Dorsolateral prefrontal cortex (tissue), 120 donors: ENCODE measurements at regions of chr2 and their contacts with region 1.

Region 1: GRCh38 chr2:219388127-219388844 is 574 bp upstream of the DNPEP start:
- DNase-seq: peak; percentile 93 to 99 (median 97)
- H3K4me3 ChIP-seq: peak overlapping the region in 58 of 59 donors; percentile 24 to 98 (median 86)
- H3K27ac ChIP-seq: peak overlapping the region in 58 of 59 donors; percentile 6 to 92 (median 81)
- H3K27me3 ChIP-seq: no peaks in the 10 kb centered on the region
- CTCF ChIP-seq: peak; percentile 24 to 80 (median 68)

Region 2: DNA sequence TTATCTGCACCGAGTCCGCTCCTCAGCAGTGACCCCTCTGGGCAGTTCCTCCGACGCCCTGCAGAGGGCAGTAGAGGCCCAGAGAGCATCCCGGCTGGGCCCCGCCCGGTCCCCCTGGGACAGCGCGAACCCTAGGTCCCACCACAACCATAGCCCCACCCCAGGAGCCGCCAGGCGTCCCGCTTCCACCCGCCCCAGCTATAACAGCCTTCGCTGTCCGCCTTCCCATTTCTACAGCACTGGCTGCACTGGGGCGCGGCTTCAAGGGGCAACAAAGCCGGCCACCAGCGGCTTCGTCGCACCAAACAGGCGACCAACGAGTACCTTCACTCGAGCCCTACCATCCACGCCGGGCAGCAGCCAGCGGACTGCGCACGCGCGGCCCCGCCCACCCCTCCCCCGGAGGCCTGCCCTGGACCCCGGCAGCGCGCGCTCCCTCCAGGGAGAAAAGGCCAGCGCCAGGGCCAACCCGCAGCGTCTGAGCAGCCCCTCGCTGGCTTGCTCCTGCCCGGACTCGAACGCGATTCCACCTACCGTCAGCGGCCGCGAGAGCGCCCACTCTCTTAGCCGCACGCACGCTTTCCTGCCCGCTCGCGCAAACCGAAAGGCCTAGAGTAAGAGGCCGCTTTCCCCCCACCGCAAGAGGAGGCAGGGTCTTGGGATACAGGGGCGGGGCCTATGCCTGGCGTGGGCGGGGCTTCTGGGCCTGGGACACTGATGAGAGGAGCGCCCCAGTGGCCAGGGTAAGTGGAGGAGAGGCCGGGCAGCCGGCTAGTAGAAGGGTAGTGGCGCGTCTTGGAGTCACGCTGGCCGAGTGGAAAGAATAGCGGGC is 227.9 kb before region 1 on chr2 and contains the start of gene NHEJ1:
- intact Hi-C with region 1: loop called in 1 of 2 experiments (anchors 10 kb)
- DNase-seq: peak; percentile 93 to 97 (median 96)
- H3K4me3 ChIP-seq: peak within 1 kb of the TSS; percentile 56 to 97 (median 75)
- H3K27ac ChIP-seq: peak within 1 kb of the TSS; percentile 86 to 99 (median 96)
- H3K27me3 ChIP-seq: no peaks in the 10 kb centered on the region
- CTCF ChIP-seq: peak; percentile 91 to 100 (median 99)
- total RNA-seq, gene NHEJ1: 5.8 to 16.8 (median 10.2) TPM

Region 3: DNA sequence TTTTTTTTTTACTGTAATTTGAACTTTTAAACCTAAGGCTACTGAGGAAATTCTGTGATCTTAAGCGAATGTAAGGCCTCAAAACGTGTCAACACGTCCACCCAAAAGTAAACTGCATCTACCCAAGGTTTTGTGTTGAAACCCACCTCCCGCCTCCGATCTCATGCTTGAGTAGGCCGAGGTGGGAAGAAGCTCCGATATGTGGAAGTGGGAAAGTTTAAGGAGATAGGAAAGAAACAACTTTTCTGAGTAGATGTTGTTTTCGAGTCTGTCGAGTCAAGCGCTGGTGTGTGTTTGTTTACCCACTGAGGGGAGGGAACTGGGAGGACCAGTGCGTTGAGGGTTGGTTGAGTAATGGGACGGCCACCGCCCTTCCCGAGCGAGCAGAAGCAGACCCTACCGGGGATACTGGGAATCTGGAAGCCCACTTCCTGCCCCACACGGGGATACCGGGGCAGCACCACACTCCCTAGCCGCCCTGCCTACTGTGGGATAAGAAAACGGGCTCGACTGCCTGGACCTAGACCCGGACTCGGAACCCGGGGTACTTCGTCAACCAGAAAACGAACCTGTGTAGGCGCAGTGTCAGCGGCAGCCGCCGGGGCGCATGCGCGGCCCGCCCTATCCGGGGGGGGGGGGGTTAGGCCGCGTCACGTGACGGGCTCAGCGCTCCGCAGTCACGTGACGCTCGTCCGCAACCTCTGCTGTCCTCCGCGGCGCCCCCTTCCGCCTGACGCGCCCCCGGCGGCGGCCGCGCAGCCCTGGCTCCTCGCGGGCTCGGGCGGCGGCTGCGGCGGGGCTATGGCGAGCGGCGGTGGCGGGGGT is 210.5 kb before region 1 on chr2 and contains the start of gene RETREG2:
- intact Hi-C with region 1: loop called in 1 of 2 experiments (anchors 10 kb)
- DNase-seq: peak; percentile 70 to 81 (median 74)
- H3K4me3 ChIP-seq: peak within 1 kb of the TSS; percentile 71 to 100 (median 96)
- H3K27ac ChIP-seq: peak within 1 kb of the TSS; percentile 93 to 100 (median 99)
- H3K27me3 ChIP-seq: no peaks in the 10 kb centered on the region
- CTCF ChIP-seq: peak in 46 of 56 donors; percentile 13 to 90 (median 60)
- total RNA-seq, gene RETREG2: 151 to 274 (median 213) TPM

Region 4: DNA sequence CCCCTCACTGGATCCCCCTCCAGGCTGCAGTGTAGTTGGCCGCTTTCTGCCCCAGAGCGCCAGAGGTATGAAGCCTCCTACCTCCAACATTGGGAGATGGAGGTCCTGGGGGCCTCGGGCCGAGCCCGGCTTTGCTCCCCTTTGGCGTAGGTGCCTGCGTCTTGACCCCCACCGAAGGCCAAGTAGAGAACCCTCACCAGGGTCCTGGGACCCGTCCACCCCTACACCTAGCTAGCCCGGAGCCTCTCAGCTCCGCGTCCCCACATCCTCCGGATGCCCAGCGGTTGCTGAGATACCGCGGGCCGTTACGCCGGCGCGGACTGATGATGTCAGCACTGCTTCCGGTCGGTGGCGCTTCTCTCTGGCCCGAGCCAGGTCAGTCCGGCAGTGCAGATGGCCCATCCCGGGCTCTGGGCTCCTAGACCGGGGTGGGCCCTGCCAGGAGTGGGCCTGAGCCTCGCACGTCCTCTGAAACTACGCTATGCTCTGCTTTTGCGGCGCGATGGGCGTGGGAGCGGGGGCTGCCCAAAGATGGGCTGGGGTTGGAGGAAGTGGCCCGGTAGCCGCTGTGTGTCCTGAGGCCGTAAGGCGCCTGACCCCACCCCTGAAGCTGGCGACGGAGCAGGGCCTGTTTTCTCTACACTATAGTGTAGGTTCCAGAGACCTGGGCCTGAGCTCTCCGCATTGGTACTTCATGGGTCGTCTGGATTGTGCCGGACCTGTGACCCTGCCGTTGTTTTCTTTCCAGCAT is 143.0 kb before region 1 on chr2 and contains the starts of genes GLB1L and STK16:
- intact Hi-C with region 1: loop called in 1 of 2 experiments (anchors 10 kb)
- DNase-seq: peak; percentile 90 to 97 (median 94)
- H3K4me3 ChIP-seq: peak within 1 kb of the TSS; percentile 67 to 100 (median 90)
- H3K27ac ChIP-seq: peak within 1 kb of the TSS; percentile 12 to 99 (median 92)
- H3K27me3 ChIP-seq: no peaks in the 10 kb centered on the region
- CTCF ChIP-seq: peak in 37 of 56 donors; percentile 10 to 58 (median 35)
- total RNA-seq, gene GLB1L: 2.9 to 10.5 (median 5.6) TPM
- total RNA-seq, gene STK16: 12.1 to 36.1 (median 21.5) TPM

Region 5: GRCh38 chr2:219278655-219279516 is 109.4 kb before region 1 on chr2 and contains the start of gene DNAJB2:
- intact Hi-C with region 1: loop called in 1 of 2 experiments (anchors 1 kb)
- DNase-seq: peak; percentile 98 to 99 (median 99)
- H3K4me3 ChIP-seq: peak within 1 kb of the TSS; percentile 73 to 99 (median 92)
- H3K27ac ChIP-seq: peak within 1 kb of the TSS; percentile 97 to 100 (median 100)
- H3K27me3 ChIP-seq: no peaks in the 10 kb centered on the region
- CTCF ChIP-seq: peak in 28 of 56 donors; percentile 2 to 57 (median 28)
- total RNA-seq, gene DNAJB2: 197 to 638 (median 283) TPM

Region 6: GRCh38 chr2:219294356-219295351 is 93.6 kb before region 1 on chr2:
- intact Hi-C with region 1: loop called in 1 of 2 experiments (anchors 5 kb)
- DNase-seq: peak; percentile 77 to 89 (median 82)
- H3K4me3 ChIP-seq: peak overlapping the region; percentile 29 to 79 (median 62)
- H3K27ac ChIP-seq: peak overlapping the region; percentile 55 to 100 (median 90)
- H3K27me3 ChIP-seq: no peaks in the 10 kb centered on the region
- CTCF ChIP-seq: peak; percentile 78 to 100 (median 100)

Region 7: DNA sequence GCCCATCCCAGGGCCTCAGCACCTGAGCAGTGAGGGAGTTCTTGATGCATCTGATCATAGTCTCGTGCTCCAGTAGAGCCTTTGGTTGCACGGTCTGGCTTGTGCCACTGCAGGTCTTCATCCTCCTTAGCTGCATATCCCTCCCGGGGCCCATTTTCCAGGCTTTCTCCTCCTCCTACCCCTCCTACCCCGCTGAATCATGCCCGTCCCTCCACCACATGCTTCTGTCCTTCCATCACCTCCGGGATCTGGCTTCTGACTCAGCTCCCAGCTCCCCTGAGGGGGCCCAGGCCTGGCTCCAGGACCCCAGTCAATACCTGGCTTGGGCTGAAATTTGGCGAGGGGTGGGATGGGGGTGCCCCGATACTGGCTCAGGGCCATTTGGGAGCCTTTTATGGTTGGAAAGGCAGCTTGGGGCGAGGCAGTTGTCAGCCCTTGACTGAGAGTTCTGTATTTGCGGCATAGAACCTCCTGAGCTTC is 64.6 kb after region 1 on chr2:
- intact Hi-C with region 1: no loop called
- DNase-seq: peak in 5 of 10 donors; percentile 52 to 78 (median 70)
- H3K4me3 ChIP-seq: no peak overlapping the region
- H3K27ac ChIP-seq: peak overlapping the region in 56 of 59 donors; percentile 27 to 90 (median 76)
- H3K27me3 ChIP-seq: peaks cover 0 to 4% (median 0%) of the 10 kb centered on the region in 45 donors
- CTCF ChIP-seq: no peak

Region 8: DNA sequence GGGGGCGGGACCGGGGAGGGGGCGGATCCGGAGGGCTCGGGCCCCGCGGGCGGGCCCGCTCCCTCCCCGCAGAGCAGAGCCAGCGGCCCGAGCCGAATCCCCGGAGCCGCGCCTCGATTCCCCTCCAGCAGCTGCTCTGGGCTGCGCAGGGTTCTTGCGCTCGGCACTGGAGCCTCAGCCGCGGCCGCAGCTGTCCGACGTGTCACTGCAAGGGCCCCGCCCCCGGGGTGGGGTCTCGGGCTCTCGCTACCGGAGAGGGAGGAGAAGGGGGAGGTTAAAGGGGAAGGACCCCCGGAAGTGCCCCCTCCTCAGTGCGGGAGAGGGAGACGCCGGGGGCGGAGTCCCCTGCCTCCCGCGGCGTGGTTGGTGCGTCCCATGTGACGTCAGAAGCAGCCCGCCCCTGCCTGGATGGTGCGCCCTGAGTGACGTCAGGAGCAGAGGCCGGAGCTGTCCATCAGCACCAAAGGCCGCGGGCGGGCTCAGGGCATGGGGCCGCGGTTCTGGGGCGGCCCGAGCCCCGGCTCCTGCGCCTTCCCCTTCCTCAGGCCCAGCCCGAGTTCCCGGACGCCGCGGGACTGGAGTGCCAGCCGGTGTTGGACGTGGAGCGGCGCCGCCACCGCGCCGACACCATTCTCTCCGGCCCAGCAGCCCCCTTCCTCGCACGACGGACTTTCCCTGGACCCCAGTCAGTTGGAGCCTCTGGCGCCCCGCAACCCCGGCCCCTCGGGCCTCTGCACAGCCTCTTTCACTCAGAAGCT is 155.5 kb after region 1 on chr2 and contains the starts of genes CHPF and TMEM198:
- intact Hi-C with region 1: loop called in 1 of 2 experiments (anchors 5 kb)
- DNase-seq: peak; percentile 97 to 100 (median 99)
- H3K4me3 ChIP-seq: peak within 1 kb of the TSS; percentile 55 to 95 (median 83)
- H3K27ac ChIP-seq: peak within 1 kb of the TSS; percentile 7 to 95 (median 88)
- H3K27me3 ChIP-seq: no peaks in the 10 kb centered on the region
- CTCF ChIP-seq: peak in 29 of 56 donors; percentile 8 to 56 (median 27)
- total RNA-seq, gene CHPF: 28.8 to 59.4 (median 41.7) TPM
- total RNA-seq, gene TMEM198: 8.5 to 24.9 (median 16.0) TPM